Activated CD4-positive, alpha-beta memory T cell treated with anti-CD3 and anti-CD28 coated beads for 36 hours (primary cell): ENCODE measurements at regions of chr1 and their contacts with region 1.

Region 1: DNA sequence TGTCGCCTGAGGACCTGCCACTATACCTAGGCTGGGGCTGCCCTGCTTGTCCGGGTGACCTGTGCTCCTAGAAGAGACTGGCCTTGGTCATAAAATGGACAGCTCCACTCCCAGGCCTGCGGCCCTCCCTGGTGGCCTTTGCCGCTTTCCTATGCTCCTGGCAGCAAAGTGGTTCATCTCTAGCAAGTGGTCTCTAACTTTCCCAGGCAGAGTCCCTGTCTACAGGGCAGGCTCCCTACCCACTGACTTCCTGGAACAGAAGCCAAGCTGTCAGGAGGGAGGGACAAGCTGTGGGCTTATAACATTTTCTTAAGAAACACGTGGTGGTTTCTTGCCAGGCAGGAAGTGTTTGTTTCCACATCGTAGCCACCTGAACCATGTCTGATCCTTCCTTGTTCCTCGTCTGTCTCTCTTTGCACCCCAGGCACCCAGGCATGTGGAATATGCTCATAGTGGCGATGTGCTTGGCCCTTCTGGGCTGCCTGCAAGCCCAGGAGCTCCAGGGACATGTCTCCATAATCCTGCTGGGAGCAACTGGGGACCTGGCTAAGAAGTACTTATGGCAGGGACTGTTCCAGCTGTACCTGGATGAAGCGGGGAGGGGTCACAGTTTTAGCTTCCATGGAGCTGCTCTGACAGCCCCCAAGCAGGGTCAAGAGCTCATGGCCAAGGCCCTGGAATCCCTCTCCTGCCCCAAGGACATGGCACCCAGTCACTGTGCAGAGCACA is 10.1 kb downstream of the H6PD start:
- DNase-seq: no peak
- H3K4me3 Mint-ChIP-seq: no peak overlapping the region
- H3K27ac Mint-ChIP-seq: no peak overlapping the region
- H3K4me1 Mint-ChIP-seq: peaks cover 20% of the 10 kb centered on the region
- H3K27me3 Mint-ChIP-seq: no peaks in the 10 kb centered on the region

Region 2: DNA sequence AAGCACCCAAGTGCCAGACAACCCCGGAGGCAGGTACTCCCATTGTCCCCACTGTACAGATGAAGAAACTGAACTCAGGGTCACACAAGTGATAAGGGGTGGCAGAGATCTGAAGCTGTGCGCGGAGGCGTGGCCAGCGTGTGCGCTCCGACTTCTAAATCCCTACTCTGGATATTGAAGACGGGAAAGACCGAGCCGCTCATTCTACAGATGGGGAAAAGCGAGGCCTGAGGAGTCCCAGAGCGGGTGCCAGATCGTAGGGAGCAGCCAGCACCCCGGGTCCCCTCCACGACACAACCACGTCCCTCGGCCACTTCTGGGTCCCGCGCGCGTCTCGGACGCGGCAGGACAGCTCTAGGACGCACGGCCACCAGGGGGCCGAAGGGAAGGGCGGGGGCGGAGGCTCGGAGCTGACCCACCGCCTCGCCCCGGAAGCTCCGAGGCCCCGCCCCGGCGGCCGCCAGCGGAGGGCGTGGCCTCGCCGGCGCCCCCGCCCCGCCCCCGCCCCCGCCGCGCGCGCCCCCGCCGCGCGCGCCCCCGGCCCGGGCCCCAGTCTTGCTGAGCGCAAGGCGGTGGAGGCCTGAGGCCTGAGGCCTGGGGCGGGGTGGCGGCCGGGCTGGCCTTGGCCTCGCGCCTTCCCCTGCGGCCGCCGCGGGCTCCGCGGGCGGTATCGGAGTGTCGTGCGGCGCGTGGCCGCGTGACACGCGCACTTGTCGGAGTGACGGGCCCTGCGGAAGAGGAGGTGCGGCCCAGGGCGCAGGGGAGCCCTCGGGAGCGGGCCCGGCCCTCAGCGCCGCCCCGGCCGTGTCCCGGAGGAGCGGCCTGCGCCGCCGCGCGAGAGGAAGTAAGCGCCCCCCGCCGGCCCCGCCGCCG is 10.2 kb before region 1 on chr1 and contains the start of gene H6PD:
- CTCF ChIA-PET with region 1: interaction called, 4 read pairs
- POLR2A ChIA-PET with region 1: interaction called, 10 read pairs
- intact Hi-C with region 1: no loop called
- DNase-seq: peak; percentile 77
- H3K4me3 Mint-ChIP-seq: peak within 1 kb of the TSS; percentile 86
- H3K27ac Mint-ChIP-seq: peak within 1 kb of the TSS; percentile 88
- H3K4me1 Mint-ChIP-seq: peaks cover 37% of the 10 kb centered on the region
- H3K27me3 Mint-ChIP-seq: no peaks in the 10 kb centered on the region
- total RNA-seq, gene H6PD: 9.3 to 10.4 TPM

Region 3: GRCh38 chr1:9676815-9677393 is 432.2 kb after region 1 on chr1:
- CTCF ChIA-PET with region 1: no interaction called
- POLR2A ChIA-PET with region 1: no interaction called
- intact Hi-C with region 1: no loop called
- DNase-seq: no peak
- H3K4me3 Mint-ChIP-seq: no peak overlapping the region
- H3K27ac Mint-ChIP-seq: peak overlapping the region; percentile 35
- H3K4me1 Mint-ChIP-seq: peaks cover 52% of the 10 kb centered on the region
- H3K27me3 Mint-ChIP-seq: no peaks in the 10 kb centered on the region